Cardiac septum (tissue), 1 donor: ENCODE measurements at regions of chr19 and their contacts with region 1.

Region 1: DNA sequence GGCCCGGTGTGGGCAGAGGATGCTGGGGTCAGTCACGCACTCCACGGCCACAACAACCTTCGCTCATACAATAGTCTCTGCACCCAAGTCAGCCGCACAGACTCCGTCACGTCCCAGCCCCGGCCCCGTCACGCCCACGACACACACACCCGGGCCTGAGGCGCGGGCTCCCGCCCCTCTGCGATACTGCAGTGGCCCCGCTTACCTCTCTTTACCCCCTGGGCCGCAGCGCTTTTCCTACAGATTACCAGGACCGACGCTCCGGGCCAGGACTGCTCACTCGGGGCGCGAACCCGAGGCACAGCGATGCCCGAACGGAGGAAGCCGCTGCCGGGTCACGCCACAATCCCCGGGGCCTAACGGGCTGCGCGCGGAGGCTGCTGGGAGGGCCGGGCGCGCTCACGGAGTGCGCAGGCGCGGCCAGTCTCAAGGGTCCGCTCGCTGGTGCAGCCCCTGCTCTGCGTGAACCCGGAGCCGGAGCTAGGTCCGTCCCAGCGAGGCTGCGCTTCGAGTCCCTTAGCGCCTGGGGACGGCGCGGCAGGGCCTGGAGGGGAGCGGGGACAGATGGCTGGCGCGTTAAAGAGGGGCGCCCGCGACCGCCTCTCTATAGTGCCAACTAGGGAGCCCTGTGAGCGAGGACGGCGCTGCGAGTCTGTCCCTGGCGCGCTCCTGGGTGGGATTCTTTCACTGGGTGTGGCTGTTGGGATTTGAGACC is at the start of gene ZFP82:
- DNase-seq: peak; percentile 88
- total RNA-seq, gene ZFP82: 5.7 TPM

Region 2: GRCh38 chr19:36214386-36215275 is 203.8 kb before region 1 on chr19 and contains the starts of genes ZNF146 and ZNF565:
- intact Hi-C with region 1: loop called (anchors 10 kb)
- DNase-seq: peak; percentile 99
- total RNA-seq, gene ZNF146: 38.6 TPM
- total RNA-seq, gene ZNF565: 4.0 TPM

Region 3: GRCh38 chr19:36378625-36379509 is 39.6 kb before region 1 on chr19 and contains the start of gene ZFP14:
- intact Hi-C with region 1: loop called (anchors 5 kb)
- DNase-seq: peak; percentile 96
- total RNA-seq, gene ZFP14: 3.2 TPM

Region 4: DNA sequence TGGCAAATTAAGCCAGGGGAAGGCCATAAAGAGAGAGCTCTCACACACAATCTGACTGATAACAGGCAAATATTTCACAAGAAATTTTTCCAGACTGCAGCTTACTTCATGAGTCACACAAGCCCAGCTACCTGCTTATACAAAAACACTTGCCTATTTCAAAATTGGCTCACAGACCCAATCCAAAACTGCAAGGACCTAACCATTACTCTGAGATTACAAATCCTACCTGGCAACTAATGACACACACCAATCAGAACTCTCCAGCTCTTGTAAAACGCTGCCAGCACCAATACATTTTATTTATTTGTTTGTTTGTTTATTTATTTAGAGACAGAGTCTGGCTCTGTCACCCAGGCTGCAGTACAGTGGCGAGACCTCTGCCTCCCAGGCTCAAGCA is 18.1 kb after region 1 on chr19:
- intact Hi-C with region 1: no loop called
- DNase-seq: no peak

Region 5: DNA sequence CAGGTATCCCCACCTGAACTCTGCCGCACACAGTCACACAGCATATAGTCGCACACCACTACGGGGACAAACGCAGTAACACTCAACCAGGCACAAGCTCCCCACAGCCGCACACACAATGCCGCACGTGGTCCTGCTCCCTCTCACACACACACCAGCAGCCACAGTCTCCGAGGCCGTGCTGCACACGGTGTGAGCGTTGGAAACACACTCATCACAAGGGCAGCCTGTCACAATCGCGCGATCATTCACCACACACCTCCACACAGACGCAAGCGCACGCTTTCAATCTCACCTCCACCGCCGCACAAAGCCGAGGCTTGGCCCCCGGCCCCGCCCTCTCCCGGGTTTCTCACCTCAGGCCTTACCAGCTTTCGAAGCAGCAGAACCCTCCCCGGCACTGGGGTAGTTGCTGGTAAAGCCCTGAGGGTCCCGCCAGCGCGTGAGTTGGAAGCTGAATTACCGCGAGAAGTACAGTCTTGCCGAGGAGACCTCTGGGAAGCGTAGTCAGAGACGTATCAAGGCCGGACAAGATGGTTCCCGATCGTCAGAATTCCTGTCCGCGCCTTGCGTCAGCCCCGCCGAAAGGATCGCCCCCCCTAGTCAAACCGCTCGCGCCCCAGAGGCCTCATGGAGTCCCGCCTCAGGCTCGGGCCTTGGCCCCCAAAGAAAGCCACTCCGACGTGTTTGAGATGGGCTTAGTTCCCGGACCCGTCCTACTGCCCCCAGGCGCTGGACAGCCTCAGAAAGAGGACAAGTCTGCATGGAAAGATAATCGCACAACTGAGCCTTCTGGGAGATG is 70.9 kb after region 1 on chr19 and contains the start of gene ZNF566:
- intact Hi-C with region 1: loop called (anchors 2 kb)
- DNase-seq: peak; percentile 92
- total RNA-seq, gene ZNF566: 8.3 TPM